Activated CD4-positive, alpha-beta memory T cell treated with anti-CD3 and anti-CD28 coated beads, Interleukin-2, amount 10 ng/mL, durations not matched to agents 7 days and 5 days (primary cell): ENCODE measurements at regions of chr12 and their contacts with region 1.

Region 1: GRCh38 chr12:9813821-9814809 is 13.2 kb upstream of the KLRF1 start:
- DNase-seq: peak; percentile 89
- H3K4me3 Mint-ChIP-seq: peak overlapping the region; percentile 73
- H3K27ac Mint-ChIP-seq: peak overlapping the region; percentile 23
- H3K4me1 Mint-ChIP-seq: peaks cover 27% of the 10 kb centered on the region
- H3K27me3 Mint-ChIP-seq: peaks cover 25% of the 10 kb centered on the region

Region 2: DNA sequence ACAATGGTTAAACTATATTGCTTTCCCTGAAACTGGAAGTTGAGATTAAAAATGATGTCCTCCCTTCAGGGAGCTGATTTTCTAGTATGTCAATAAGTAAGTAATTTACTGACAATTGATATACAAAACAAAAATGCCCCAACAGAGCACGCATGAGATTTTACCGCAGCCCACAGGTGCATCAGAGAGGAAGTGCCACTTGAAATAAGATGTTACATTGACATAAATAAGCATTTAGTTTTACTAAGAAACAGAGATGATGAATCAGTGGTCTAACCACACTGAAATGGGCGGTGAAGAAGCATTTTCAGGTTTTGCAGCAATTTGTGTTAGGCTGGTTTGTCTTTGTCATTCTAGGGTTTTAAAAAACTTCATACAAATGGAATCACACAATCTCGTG is 72.4 kb before region 1 on chr12:
- CTCF ChIA-PET with region 1: interaction called, 232 read pairs
- POLR2A ChIA-PET with region 1: interaction called, 10 read pairs
- DNase-seq: peak; percentile 89
- H3K4me3 Mint-ChIP-seq: peak overlapping the region; percentile 79
- H3K27ac Mint-ChIP-seq: peak overlapping the region; percentile 98
- H3K4me1 Mint-ChIP-seq: peaks cover 71% of the 10 kb centered on the region
- H3K27me3 Mint-ChIP-seq: no peaks in the 10 kb centered on the region

Region 3: DNA sequence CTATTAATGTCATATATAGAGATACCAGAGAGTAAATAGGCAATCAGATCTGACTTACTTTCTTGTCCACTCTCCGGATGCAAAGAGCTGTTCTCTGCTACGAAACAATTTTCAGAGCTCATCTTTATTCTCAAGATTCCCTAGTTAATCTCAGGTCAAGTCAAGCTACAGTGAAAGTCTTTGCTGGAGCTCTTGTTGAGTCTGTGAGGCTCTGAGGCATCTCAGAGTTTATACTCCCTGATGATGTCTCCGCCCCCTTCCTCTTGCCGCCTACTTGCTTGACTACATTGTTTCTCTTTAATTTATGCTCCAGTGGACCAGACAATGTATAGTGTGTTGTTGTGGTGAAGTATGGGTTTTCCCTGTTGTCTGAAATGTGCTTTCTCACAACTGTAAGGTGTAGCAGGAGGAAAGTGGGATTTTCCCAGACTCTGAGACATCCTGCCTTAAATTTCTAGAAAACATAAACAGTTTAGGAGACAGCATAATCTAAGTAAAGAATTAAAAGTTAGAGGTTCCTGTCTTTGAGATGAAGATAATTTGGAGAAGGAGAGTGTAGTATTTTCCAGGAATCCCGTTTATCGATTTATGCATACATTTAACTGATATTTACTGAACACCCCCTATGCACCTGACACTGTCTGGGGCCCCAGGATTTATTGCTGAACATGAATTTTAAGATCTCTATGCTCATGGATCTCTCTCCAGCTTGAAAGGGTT is 53.3 kb before region 1 on chr12 and contains the start of gene CD69:
- CTCF ChIA-PET with region 1: interaction called, 12 read pairs
- POLR2A ChIA-PET with region 1: interaction called, 3 read pairs
- DNase-seq: peak; percentile 88
- H3K4me3 Mint-ChIP-seq: peak within 1 kb of the TSS; percentile 99
- H3K27ac Mint-ChIP-seq: peak within 1 kb of the TSS; percentile 86
- H3K4me1 Mint-ChIP-seq: peaks cover 53% of the 10 kb centered on the region
- H3K27me3 Mint-ChIP-seq: no peaks in the 10 kb centered on the region
- total RNA-seq, gene CD69: 196 to 197 TPM

Region 4: DNA sequence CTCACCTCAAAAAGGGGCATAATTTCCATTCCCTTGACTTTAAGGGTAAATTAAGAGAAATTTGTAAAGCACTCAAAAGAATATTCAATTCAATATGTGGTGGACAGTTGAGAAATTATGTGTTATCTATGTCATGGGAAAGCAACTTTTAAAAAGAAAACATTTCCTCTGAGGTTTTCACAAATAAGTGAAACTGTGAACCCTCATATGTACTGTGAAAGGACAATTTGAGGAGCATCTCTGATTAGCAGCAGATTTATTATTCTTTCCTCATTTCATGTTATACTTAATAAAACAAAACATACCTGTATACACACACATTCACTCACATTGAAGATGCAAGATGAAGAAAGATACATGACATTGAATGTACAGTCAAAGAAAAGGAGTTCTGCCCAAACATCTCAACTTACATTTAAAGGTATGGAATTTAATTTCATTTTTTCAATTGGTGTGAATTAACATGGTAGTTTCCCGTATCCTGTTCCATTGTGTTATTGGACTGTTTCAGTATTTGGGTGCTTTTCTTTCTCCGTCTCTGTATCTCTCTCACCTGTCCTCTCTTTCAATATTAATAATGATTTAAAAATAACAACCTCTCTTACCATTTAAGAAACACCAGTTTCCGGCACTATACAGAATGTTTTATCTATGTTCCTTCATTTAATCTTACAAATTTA is 13.2 kb after region 1 on chr12 and contains the start of gene KLRF1:
- CTCF ChIA-PET with region 1: interaction called, 15 read pairs
- POLR2A ChIA-PET with region 1: no interaction called
- DNase-seq: no peak
- H3K4me3 Mint-ChIP-seq: no peak within 1 kb of the TSS
- H3K27ac Mint-ChIP-seq: no peak within 1 kb of the TSS
- H3K4me1 Mint-ChIP-seq: no peaks in the 10 kb centered on the region
- H3K27me3 Mint-ChIP-seq: peaks cover 29% of the 10 kb centered on the region
- total RNA-seq, gene KLRF1: 0.38 to 0.48 TPM

Region 5: GRCh38 chr12:9883175-9883574 is 69.1 kb after region 1 on chr12:
- CTCF ChIA-PET with region 1: interaction called, 14 read pairs
- POLR2A ChIA-PET with region 1: no interaction called
- DNase-seq: no peak
- H3K4me3 Mint-ChIP-seq: no peak overlapping the region
- H3K27ac Mint-ChIP-seq: no peak overlapping the region
- H3K4me1 Mint-ChIP-seq: peaks cover 14% of the 10 kb centered on the region
- H3K27me3 Mint-ChIP-seq: peaks cover 1% of the 10 kb centered on the region

Region 6: DNA sequence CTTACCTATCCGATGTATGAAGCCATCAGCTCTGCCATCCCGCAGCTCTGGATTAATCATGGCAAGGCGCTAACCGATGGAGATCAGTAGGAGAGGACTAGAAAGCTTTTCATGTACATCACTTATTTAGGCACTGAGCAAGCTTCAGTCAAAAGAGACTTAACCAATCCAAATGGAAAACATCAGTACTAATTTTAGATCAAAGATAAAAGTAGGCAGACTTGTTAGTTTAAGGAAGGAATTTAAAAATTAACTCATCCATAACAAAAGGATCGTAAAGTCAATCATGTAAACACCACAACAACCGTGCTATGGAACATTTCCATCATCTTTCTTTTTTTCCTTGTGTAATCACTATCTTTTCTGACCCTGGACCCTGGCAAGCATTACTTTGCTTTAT is 118.2 kb after region 1 on chr12 and contains the start of gene CLEC2A:
- CTCF ChIA-PET with region 1: interaction called, 24 read pairs
- POLR2A ChIA-PET with region 1: no interaction called
- DNase-seq: no peak
- H3K4me3 Mint-ChIP-seq: no peak within 1 kb of the TSS
- H3K27ac Mint-ChIP-seq: no peak within 1 kb of the TSS
- H3K4me1 Mint-ChIP-seq: no peaks in the 10 kb centered on the region
- H3K27me3 Mint-ChIP-seq: peaks cover 18% of the 10 kb centered on the region
- total RNA-seq, gene CLEC2A: not detected

Region 7: DNA sequence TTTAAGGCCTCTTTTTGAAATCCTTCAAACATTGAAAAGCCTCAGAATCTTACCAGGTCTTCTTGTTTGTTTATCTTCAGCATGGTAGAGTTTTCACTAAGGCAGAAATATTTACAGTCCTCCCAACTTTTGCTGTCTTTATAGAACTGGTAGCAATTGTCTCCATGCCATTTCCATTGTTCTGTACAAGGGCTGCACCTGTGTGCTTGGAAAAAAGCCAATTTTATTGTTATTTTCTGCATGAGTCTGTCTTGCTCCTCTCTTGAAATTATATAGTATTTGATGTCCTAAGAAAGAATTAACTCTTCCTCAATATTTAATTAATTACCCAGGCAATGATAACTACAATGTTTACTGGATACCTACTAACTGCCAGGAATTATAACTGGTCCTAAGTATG is 261.3 kb after region 1 on chr12:
- CTCF ChIA-PET with region 1: no interaction called
- POLR2A ChIA-PET with region 1: no interaction called
- DNase-seq: no peak
- H3K4me3 Mint-ChIP-seq: no peak overlapping the region
- H3K27ac Mint-ChIP-seq: no peak overlapping the region
- H3K4me1 Mint-ChIP-seq: no peaks in the 10 kb centered on the region
- H3K27me3 Mint-ChIP-seq: peaks cover 27% of the 10 kb centered on the region

Region 8: GRCh38 chr12:10131111-10131650 is 317.1 kb after region 1 on chr12:
- CTCF ChIA-PET with region 1: no interaction called
- POLR2A ChIA-PET with region 1: no interaction called
- DNase-seq: no peak
- H3K4me3 Mint-ChIP-seq: no peak overlapping the region
- H3K27ac Mint-ChIP-seq: no peak overlapping the region
- H3K4me1 Mint-ChIP-seq: peaks cover 12% of the 10 kb centered on the region
- H3K27me3 Mint-ChIP-seq: peaks cover 17% of the 10 kb centered on the region